Vagina (tissue), 2 donors: ENCODE measurements at regions of chr7 and their contacts with region 1.

Region 1: GRCh38 chr7:95545078-95545498 is 51.2 kb downstream of the PDK4 start:
- DNase-seq: no peak
- H3K4me3 ChIP-seq: peak overlapping the region; percentile 17 to 36
- H3K27ac ChIP-seq: peak overlapping the region; percentile 79
- H3K4me1 ChIP-seq: peaks cover 40% of the 10 kb centered on the region
- H3K27me3 ChIP-seq: no peaks in the 10 kb centered on the region
- CTCF ChIP-seq: peak in 2 of 3 experiments; percentile 59 to 66
- POLR2A ChIP-seq: no peak

Region 2: DNA sequence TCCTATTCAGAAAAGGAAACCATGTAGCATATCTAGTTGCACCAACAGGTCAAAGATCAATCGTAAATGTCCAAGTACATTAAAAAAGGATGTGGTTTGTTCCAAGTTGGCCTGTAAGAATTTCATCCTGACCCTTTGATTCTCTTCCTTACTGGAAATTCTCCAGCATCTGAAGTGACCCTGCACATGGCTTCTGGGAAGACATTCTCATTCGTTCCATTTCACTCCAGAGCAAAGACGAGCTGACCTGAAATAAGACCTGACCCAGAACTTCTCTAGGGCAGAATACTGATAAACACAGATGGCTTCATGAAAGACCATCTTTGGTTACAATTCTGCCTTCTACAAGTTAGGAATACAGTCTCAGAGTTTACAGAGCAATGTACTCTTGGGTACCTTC is 19.6 kb before region 1 on chr7:
- intact Hi-C with region 1: loop called (anchors 2 kb)
- DNase-seq: no peak
- H3K4me3 ChIP-seq: no peak overlapping the region
- H3K27ac ChIP-seq: peak overlapping the region; percentile 5
- H3K4me1 ChIP-seq: no peaks in the 10 kb centered on the region
- H3K27me3 ChIP-seq: no peaks in the 10 kb centered on the region
- CTCF ChIP-seq: no peak
- POLR2A ChIP-seq: no peak

Region 3: GRCh38 chr7:95596198-95597063 is 51.3 kb after region 1 on chr7 and contains the start of gene PDK4:
- intact Hi-C with region 1: loop called (anchors 5 kb)
- DNase-seq: peak in 1 of 2 donors; percentile 98
- H3K4me3 ChIP-seq: peak within 1 kb of the TSS; percentile 75 to 96
- H3K27ac ChIP-seq: peak within 1 kb of the TSS; percentile 91
- H3K4me1 ChIP-seq: peaks cover 10% of the 10 kb centered on the region
- H3K27me3 ChIP-seq: no peaks in the 10 kb centered on the region
- CTCF ChIP-seq: no peak
- POLR2A ChIP-seq: peak in 1 of 2 donors; percentile 86
- total RNA-seq, gene PDK4: 399 TPM

Region 4: DNA sequence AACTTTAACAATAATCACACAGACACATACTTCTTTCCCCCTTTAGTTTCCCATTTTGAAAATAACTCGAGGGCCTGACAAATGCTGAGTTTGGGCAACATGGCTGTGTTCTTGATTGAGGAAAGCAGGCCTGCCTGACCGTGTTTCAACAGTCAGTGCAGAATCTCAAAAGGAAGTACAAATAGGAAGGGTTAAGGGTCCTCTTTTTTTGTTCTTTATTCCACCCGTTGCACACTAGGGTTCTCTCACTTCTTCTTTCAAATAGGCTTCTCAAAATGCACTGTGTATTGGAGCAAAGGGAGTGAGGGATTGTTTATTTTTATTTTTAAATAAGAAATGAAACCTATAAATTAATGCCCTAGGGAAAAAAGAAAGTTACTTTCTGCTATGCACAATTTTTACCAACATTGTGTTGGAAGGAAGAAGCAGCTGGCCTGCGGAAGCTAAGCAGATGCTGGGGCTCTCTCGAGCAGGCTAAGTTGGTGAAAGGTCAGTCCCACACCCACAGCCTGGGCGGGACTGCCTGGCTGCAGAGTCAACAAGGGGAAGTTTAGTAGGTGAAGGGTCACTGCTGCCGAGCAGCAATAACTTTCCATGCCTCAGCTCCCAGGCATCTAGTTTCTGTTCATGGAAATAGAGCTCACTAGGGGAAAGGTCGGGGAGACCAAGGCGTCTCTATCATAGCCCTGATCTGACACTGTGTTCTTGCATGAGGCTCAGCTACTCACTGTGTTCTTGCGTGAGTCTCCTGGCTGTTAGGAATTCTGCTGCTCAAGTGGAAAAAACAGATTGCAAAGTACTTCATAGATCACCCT is 63.5 kb after region 1 on chr7:
- intact Hi-C with region 1: loop called (anchors 5 kb)
- DNase-seq: peak in 1 of 2 donors; percentile 100
- H3K4me3 ChIP-seq: no peak overlapping the region
- H3K27ac ChIP-seq: peak overlapping the region; percentile 92
- H3K4me1 ChIP-seq: peaks cover 34% of the 10 kb centered on the region
- H3K27me3 ChIP-seq: no peaks in the 10 kb centered on the region
- CTCF ChIP-seq: no peak
- POLR2A ChIP-seq: no peak